ENCODE measurements at regions of chr11 and their contacts with region 1.

Region 1: DNA sequence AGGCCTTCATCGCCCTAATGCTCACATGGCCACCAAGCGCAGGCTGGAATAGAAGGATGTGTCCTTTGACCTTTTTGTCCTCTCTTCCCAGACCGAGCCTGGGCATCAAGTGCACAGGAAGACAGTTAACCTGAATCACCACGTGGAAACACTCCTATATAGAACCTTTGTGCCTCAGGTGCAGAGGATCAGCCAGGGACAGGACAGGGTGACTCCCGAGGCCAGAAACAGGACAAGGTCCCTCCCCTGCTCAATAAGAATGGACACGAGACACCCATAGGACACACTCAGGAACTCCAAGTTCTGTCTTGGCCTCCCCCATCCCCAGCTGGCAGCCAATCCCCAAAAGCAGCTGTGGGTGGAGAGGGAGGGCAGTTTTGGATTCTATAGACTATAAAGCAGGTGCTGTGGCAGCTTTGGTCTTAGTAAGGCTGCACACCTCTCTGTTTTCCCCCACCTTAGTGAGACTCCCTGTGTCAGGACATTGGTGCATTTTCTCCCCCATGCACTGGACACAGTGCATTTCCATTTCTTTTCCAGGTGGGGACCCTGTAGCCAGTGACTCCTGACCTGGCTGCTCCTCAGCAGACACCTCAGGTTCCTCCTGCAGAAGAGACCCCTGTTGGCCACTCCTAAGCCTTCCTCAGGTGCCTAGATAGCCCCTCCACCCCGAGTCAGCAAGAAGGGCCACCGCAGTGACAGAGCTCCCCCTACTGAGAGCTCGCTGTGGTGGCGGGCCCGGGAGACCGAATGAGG is 43.6 kb upstream of the POU2AF1 start:
- DNase-seq: peak; percentile 84
- ATAC-seq: peak; percentile 83
- H3K4me3 ChIP-seq: no peak overlapping the region
- H3K4me3 Mint-ChIP-seq: peak overlapping the region; percentile 64
- H3K27ac ChIP-seq: no peak overlapping the region
- H3K27ac Mint-ChIP-seq: peak overlapping the region; percentile 90
- H3K4me1 ChIP-seq: peaks cover 58% of the 10 kb centered on the region in 2 donors
- H3K4me1 Mint-ChIP-seq: peaks cover 58% of the 10 kb centered on the region
- H3K27me3 ChIP-seq: no peaks in the 10 kb centered on the region
- H3K27me3 Mint-ChIP-seq: no peaks in the 10 kb centered on the region
- CTCF ChIP-seq: peak; percentile 88

Region 2: DNA sequence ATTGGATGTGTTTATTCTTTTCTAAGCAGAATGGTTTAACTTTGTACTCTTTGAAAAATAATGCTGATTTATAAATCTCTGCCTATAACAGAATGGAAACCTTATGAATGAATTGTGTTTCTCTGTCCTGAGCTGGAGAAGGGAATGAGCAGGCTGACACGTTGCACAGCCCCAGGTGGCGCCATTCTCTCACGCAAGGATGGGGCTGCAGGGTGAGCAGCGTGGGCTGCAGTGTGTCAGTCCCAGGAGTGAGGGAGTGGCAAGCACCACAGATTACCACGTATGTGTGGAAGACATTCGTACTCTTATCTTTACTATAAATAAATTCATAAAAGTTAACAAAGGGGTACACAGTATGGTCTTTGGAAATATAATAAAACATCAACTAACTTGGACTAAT is 959.5 kb before region 1 on chr11:
- CTCF ChIA-PET with region 1: interaction called, 11 read pairs
- POLR2A ChIA-PET with region 1: no interaction called
- intact Hi-C with region 1: no loop called
- DNase-seq: peak; percentile 47
- ATAC-seq: peak; percentile 33
- H3K4me3 ChIP-seq: no peak overlapping the region
- H3K4me3 Mint-ChIP-seq: no peak overlapping the region
- H3K27ac ChIP-seq: no peak overlapping the region
- H3K27ac Mint-ChIP-seq: no peak overlapping the region
- H3K4me1 ChIP-seq: no peaks in the 10 kb centered on the region
- H3K4me1 Mint-ChIP-seq: peaks cover 1% of the 10 kb centered on the region
- H3K27me3 ChIP-seq: no peaks in the 10 kb centered on the region
- H3K27me3 Mint-ChIP-seq: no peaks in the 10 kb centered on the region
- CTCF ChIP-seq: peak; percentile 46

Region 3: GRCh38 chr11:111230122-111230465 is 192.6 kb before region 1 on chr11:
- CTCF ChIA-PET with region 1: interaction called, 22 read pairs
- POLR2A ChIA-PET with region 1: no interaction called
- intact Hi-C with region 1: loop called (anchors 1 kb)
- DNase-seq: no peak
- ATAC-seq: peak; percentile 35
- H3K4me3 ChIP-seq: peak overlapping the region in 3 of 5 experiments; percentile 32 to 46 (median 36)
- H3K4me3 Mint-ChIP-seq: peak overlapping the region; percentile 79
- H3K27ac ChIP-seq: no peak overlapping the region
- H3K27ac Mint-ChIP-seq: peak overlapping the region; percentile 74
- H3K4me1 ChIP-seq: peaks cover 23 to 24% of the 10 kb centered on the region in 2 donors
- H3K4me1 Mint-ChIP-seq: peaks cover 37% of the 10 kb centered on the region
- H3K27me3 ChIP-seq: no peaks in the 10 kb centered on the region
- H3K27me3 Mint-ChIP-seq: no peaks in the 10 kb centered on the region
- CTCF ChIP-seq: no peak

Region 4: DNA sequence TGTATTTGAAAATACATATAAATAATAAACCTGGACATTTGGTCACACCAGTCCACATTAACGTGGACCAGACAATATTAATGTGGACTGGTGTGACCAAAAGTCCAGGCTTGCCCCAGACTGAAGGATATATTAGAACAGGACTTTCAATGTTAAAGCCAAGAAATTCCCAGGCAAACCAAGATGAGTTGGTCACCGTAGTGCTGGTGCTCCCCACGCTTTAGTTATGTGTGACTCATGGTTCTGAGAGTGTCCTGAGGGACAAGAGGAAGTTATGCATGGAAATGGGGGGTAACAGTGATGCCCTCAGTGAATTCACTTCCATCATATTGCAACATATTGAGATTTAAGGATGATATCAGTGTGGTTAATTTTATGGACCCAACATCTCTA is 75.0 kb before region 1 on chr11:
- CTCF ChIA-PET with region 1: interaction called, 922 read pairs
- POLR2A ChIA-PET with region 1: interaction called, 6 read pairs
- intact Hi-C with region 1: loop called (anchors 2 kb)
- DNase-seq: no peak
- ATAC-seq: no peak
- H3K4me3 ChIP-seq: no peak overlapping the region
- H3K4me3 Mint-ChIP-seq: no peak overlapping the region
- H3K27ac ChIP-seq: no peak overlapping the region
- H3K27ac Mint-ChIP-seq: peak overlapping the region; percentile 62
- H3K4me1 ChIP-seq: peaks cover 2 to 11% of the 10 kb centered on the region in 2 donors
- H3K4me1 Mint-ChIP-seq: peaks cover 59% of the 10 kb centered on the region
- H3K27me3 ChIP-seq: no peaks in the 10 kb centered on the region
- H3K27me3 Mint-ChIP-seq: no peaks in the 10 kb centered on the region
- CTCF ChIP-seq: no peak

Region 5: GRCh38 chr11:111387363-111387762 is 35.3 kb before region 1 on chr11:
- CTCF ChIA-PET with region 1: interaction called, 76 read pairs
- POLR2A ChIA-PET with region 1: interaction called, 21 read pairs
- intact Hi-C with region 1: no loop called
- DNase-seq: no peak
- ATAC-seq: no peak
- H3K4me3 ChIP-seq: no peak overlapping the region
- H3K4me3 Mint-ChIP-seq: no peak overlapping the region
- H3K27ac ChIP-seq: no peak overlapping the region
- H3K27ac Mint-ChIP-seq: no peak overlapping the region
- H3K4me1 ChIP-seq: peaks cover 30 to 34% of the 10 kb centered on the region in 2 donors
- H3K4me1 Mint-ChIP-seq: peaks cover 40% of the 10 kb centered on the region
- H3K27me3 ChIP-seq: no peaks in the 10 kb centered on the region
- H3K27me3 Mint-ChIP-seq: no peaks in the 10 kb centered on the region
- CTCF ChIP-seq: no peak

Region 6: GRCh38 chr11:111408789-111409727 is 13.6 kb before region 1 on chr11:
- CTCF ChIA-PET with region 1: interaction called, 17 read pairs
- POLR2A ChIA-PET with region 1: interaction called, 16 read pairs
- intact Hi-C with region 1: loop called (anchors 1 kb)
- DNase-seq: no peak
- ATAC-seq: no peak
- H3K4me3 ChIP-seq: no peak overlapping the region
- H3K4me3 Mint-ChIP-seq: peak overlapping the region; percentile 67
- H3K27ac ChIP-seq: peak overlapping the region; percentile 4 to 60
- H3K27ac Mint-ChIP-seq: peak overlapping the region; percentile 90
- H3K4me1 ChIP-seq: peaks cover 55 to 65% of the 10 kb centered on the region in 2 donors
- H3K4me1 Mint-ChIP-seq: peaks cover 76% of the 10 kb centered on the region
- H3K27me3 ChIP-seq: no peaks in the 10 kb centered on the region
- H3K27me3 Mint-ChIP-seq: no peaks in the 10 kb centered on the region
- CTCF ChIP-seq: no peak